ENCODE measurements at regions of chr15 and their contacts with region 1.

Region 1: GRCh38 chr15:95604634-95605036 is 725.9 kb upstream of the NR2F2 start:
- DNase-seq: peak in 1 of 2 donors; percentile 83
- H3K4me3 ChIP-seq: no peak overlapping the region
- H3K27ac ChIP-seq: peak overlapping the region in 1 of 5 donors; percentile 27
- H3K4me1 ChIP-seq: peaks cover 0 to 19% (median 6%) of the 10 kb centered on the region in 4 donors
- H3K27me3 ChIP-seq: no peaks in the 10 kb centered on the region
- CTCF ChIP-seq: no peak
- EP300 ChIP-seq: no peak
- POLR2A ChIP-seq: no peak

Region 2: GRCh38 chr15:94844538-94845389 is 759.9 kb before region 1 on chr15:
- intact Hi-C with region 1: no loop called
- DNase-seq: peak; percentile 82 to 93
- H3K4me3 ChIP-seq: peak overlapping the region; percentile 47 to 53 (median 48)
- H3K27ac ChIP-seq: peak overlapping the region; percentile 74 to 93 (median 88)
- H3K4me1 ChIP-seq: peaks cover 4 to 17% (median 13%) of the 10 kb centered on the region in 4 donors
- H3K27me3 ChIP-seq: peaks cover 0 to 3% (median 0%) of the 10 kb centered on the region in 3 donors
- CTCF ChIP-seq: peak in 1 of 7 experiments; percentile 24
- EP300 ChIP-seq: no peak
- POLR2A ChIP-seq: no peak

Region 3: GRCh38 chr15:95557226-95558046 is 47.2 kb before region 1 on chr15:
- intact Hi-C with region 1: loop called (anchors 5 kb)
- DNase-seq: peak in 1 of 2 donors; percentile 18
- H3K4me3 ChIP-seq: no peak overlapping the region
- H3K27ac ChIP-seq: no peak overlapping the region
- H3K4me1 ChIP-seq: peaks cover 0 to 11% (median 0%) of the 10 kb centered on the region in 4 donors
- H3K27me3 ChIP-seq: no peaks in the 10 kb centered on the region
- CTCF ChIP-seq: no peak
- EP300 ChIP-seq: no peak
- POLR2A ChIP-seq: no peak

Measured in stomach (tissue), 19 donors.